Naive thymus-derived CD4-positive, alpha-beta T cell (primary cell): ENCODE measurements at regions of chr16 and their contacts with region 1.

Region 1: DNA sequence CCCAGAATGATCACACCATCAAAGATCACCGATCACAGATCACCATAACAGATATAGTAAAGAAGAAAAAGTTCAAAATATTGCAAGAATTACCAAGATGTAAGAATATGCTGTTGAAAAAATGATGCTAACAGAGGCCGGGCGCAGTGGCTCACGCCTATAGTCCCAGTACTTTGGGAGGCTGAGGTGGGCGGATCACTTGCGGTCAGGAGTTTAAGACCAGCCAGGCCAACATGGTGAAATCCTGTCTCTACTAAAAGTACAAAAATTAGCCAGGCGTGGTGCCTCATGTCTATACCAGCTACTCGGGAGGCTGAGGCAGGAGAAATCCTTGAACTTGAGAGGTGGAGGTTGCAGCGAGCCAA is 53.2 kb downstream of the CPPED1 start:
- DNase-seq: no peak
- ATAC-seq: no peak
- H3K4me3 ChIP-seq: no peak overlapping the region
- H3K4me3 Mint-ChIP-seq: peak overlapping the region in 1 of 10 donors; percentile 65
- H3K27ac ChIP-seq: no peak overlapping the region
- H3K27ac Mint-ChIP-seq: peak overlapping the region in 1 of 9 donors; percentile 89
- H3K4me1 ChIP-seq: no peaks in the 10 kb centered on the region
- H3K4me1 Mint-ChIP-seq: peaks cover 0 to 34% (median 6%) of the 10 kb centered on the region in 7 donors
- H3K27me3 ChIP-seq: no peaks in the 10 kb centered on the region
- H3K27me3 Mint-ChIP-seq: no peaks in the 10 kb centered on the region

Region 2: GRCh38 chr16:12646490-12647274 is 103.9 kb before region 1 on chr16:
- CTCF ChIA-PET with region 1: no interaction called
- POLR2A ChIA-PET with region 1: no interaction called
- intact Hi-C with region 1: loop called in 1 of 2 experiments (anchors 1 kb)
- DNase-seq: peak in 5 of 9 donors; percentile 13 to 39 (median 31)
- ATAC-seq: peak; percentile 37
- H3K4me3 ChIP-seq: no peak overlapping the region
- H3K4me3 Mint-ChIP-seq: peak overlapping the region in 6 of 10 donors; percentile 20 to 63 (median 34)
- H3K27ac ChIP-seq: peak overlapping the region; percentile 1
- H3K27ac Mint-ChIP-seq: peak overlapping the region in 3 of 9 donors; percentile 11 to 95 (median 56)
- H3K4me1 ChIP-seq: peaks cover 0 to 9% of the 10 kb centered on the region in 2 donors
- H3K4me1 Mint-ChIP-seq: peaks cover 13 to 30% (median 20%) of the 10 kb centered on the region in 7 donors
- H3K27me3 ChIP-seq: no peaks in the 10 kb centered on the region
- H3K27me3 Mint-ChIP-seq: peaks cover 0 to 5% (median 0%) of the 10 kb centered on the region in 5 donors